ENCODE measurements at regions of chr9 and their contacts with region 1.

Region 1: GRCh38 chr9:78235756-78236538 is at the start of gene CEP78:
- H3K4me3 ChIP-seq: peak within 1 kb of the TSS; percentile 87
- H3K27ac ChIP-seq: peak within 1 kb of the TSS; percentile 88
- H3K4me1 ChIP-seq: no peaks in the 10 kb centered on the region; the same call in 1 of the 2 replicates
- CTCF ChIP-seq: 0 out of 2 replicates have a peak, but pooled peaks have one; percentile 26

Region 2: DNA sequence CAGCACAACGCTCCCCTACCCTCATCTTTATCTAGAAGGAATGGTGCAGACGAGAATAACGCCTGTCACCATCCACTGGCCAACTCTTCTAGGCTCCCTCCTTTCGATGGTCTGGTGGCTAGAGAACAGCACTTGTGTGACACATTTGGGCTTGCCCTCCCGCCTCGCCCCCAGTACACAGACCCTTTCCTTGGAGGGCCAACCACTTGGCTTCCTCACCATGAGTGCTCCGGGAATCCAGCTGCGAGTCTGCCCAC is 205.7 kb before region 1 on chr9:
- CTCF ChIA-PET with region 1: no interaction called
- POLR2A ChIA-PET with region 1: no interaction called
- H3K4me3 ChIP-seq: peak overlapping the region; percentile 67
- H3K27ac ChIP-seq: peak overlapping the region; percentile 83
- H3K4me1 ChIP-seq: peaks cover 4% of the 10 kb centered on the region
- CTCF ChIP-seq: no peak

Region 3: GRCh38 chr9:78074385-78075291 is 161.3 kb before region 1 on chr9:
- CTCF ChIA-PET with region 1: no interaction called
- POLR2A ChIA-PET with region 1: no interaction called
- H3K4me3 ChIP-seq: no peak overlapping the region
- H3K27ac ChIP-seq: no peak overlapping the region
- H3K4me1 ChIP-seq: no peaks in the 10 kb centered on the region
- CTCF ChIP-seq: no peak

Region 4: GRCh38 chr9:78248635-78249034 is 12.7 kb after region 1 on chr9:
- CTCF ChIA-PET with region 1: interaction called, 13 read pairs
- POLR2A ChIA-PET with region 1: no interaction called
- H3K4me3 ChIP-seq: no peak overlapping the region
- H3K27ac ChIP-seq: no peak overlapping the region
- H3K4me1 ChIP-seq: no peaks in the 10 kb centered on the region
- CTCF ChIP-seq: no peak

Measured in HEK293 (cell line).